ENCODE measurements at regions of chr14 and their contacts with region 1.

Region 1: DNA sequence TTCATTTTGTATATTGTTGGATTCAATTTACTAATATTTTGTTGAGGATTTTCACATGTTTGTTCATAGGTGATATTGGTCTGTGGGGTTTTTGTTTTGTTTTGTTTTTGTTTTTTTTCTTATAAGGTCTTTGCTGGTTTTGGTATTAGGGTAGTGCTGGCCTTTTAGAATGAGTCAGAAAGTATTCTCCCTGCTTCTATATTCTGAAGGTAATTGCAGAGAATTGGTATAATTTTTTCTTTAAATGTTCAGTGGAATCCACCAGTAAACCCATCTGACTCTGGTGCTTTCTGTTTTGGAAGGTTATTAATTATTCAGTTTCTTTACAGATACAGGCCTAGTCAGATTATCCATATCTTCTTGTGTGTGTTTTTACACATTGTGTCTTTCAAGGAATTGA is 8.9 kb downstream of the TOGARAM1 start:
- DNase-seq: no peak
- ATAC-seq: no peak
- H3K4me3 ChIP-seq: no peak overlapping the region
- H3K27ac ChIP-seq: no peak overlapping the region
- H3K4me1 ChIP-seq: peaks cover 3% of the 10 kb centered on the region; the same call in 1 of the 2 replicates
- H3K27me3 ChIP-seq: no peaks in the 10 kb centered on the region
- CTCF ChIP-seq: no peak
- POLR2A ChIP-seq: no peak
- RAD21 ChIP-seq: no peak

Region 2: DNA sequence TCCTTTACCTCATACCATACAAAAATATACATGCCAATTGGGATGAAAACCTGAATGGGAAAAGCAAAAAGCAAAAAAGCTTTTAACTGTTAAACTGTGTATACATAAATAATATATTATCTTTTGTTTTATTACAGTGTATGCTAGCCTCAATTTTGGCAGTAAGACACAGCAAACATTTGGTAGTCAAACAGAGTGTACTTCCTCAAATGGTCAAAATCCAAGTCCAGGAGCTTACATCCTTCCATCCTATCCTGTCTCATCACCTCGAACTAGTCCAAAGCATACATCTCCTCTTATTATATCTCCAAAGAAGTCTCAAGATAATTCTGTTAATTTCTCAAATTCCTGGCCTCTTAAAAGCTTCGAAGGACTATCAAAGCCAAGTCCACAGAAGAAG is 33.0 kb after region 1 on chr14:
- CTCF ChIA-PET with region 1: no interaction called
- POLR2A ChIA-PET with region 1: no interaction called
- dilution Hi-C with region 1: no loop called
- in situ Hi-C with region 1: no loop called
- intact Hi-C with region 1: loop called (anchors 5 kb)
- DNase-seq: no peak
- ATAC-seq: no peak
- H3K4me3 ChIP-seq: no peak overlapping the region
- H3K27ac ChIP-seq: no peak overlapping the region
- H3K4me1 ChIP-seq: no peaks in the 10 kb centered on the region
- H3K27me3 ChIP-seq: no peaks in the 10 kb centered on the region
- CTCF ChIP-seq: no peak
- POLR2A ChIP-seq: no peak
- RAD21 ChIP-seq: no peak

Region 3: GRCh38 chr14:45091696-45092095 is 120.8 kb after region 1 on chr14:
- CTCF ChIA-PET with region 1: no interaction called
- POLR2A ChIA-PET with region 1: no interaction called
- dilution Hi-C with region 1: no loop called
- in situ Hi-C with region 1: no loop called
- intact Hi-C with region 1: no loop called
- DNase-seq: peak; percentile 36
- ATAC-seq: no peak
- H3K4me3 ChIP-seq: no peak overlapping the region
- H3K27ac ChIP-seq: no peak overlapping the region
- H3K4me1 ChIP-seq: peaks cover 2% of the 10 kb centered on the region; the same call in 1 of the 2 replicates
- H3K27me3 ChIP-seq: no peaks in the 10 kb centered on the region
- CTCF ChIP-seq: no peak
- POLR2A ChIP-seq: no peak
- RAD21 ChIP-seq: no peak

Region 4: GRCh38 chr14:45673420-45673819 is 702.5 kb after region 1 on chr14:
- CTCF ChIA-PET with region 1: no interaction called
- POLR2A ChIA-PET with region 1: no interaction called
- dilution Hi-C with region 1: no loop called
- in situ Hi-C with region 1: no loop called
- intact Hi-C with region 1: no loop called
- DNase-seq: no peak
- ATAC-seq: no peak
- H3K4me3 ChIP-seq: no peak overlapping the region
- H3K27ac ChIP-seq: no peak overlapping the region
- H3K4me1 ChIP-seq: no peaks in the 10 kb centered on the region
- H3K27me3 ChIP-seq: no peaks in the 10 kb centered on the region
- CTCF ChIP-seq: no peak
- POLR2A ChIP-seq: no peak
- RAD21 ChIP-seq: no peak